ENCODE measurements at regions of chr9 and their contacts with region 1.

Region 1: GRCh38 chr9:104747558-104748358 is at the start of gene NIPSNAP3A:
- DNase-seq: peak; percentile 85
- H3K4me3 Mint-ChIP-seq: peak within 1 kb of the TSS; percentile 98
- H3K27ac Mint-ChIP-seq: peak within 1 kb of the TSS; percentile 98
- H3K4me1 Mint-ChIP-seq: peaks cover 22% of the 10 kb centered on the region
- H3K27me3 Mint-ChIP-seq: no peaks in the 10 kb centered on the region
- total RNA-seq, gene NIPSNAP3A: 10.3 and 10.8 TPM in 2 replicates

Region 2: GRCh38 chr9:103301051-103301450 is 1446.7 kb before region 1 on chr9:
- intact Hi-C with region 1: no loop called
- DNase-seq: no peak
- H3K4me3 Mint-ChIP-seq: no peak overlapping the region
- H3K27ac Mint-ChIP-seq: no peak overlapping the region
- H3K4me1 Mint-ChIP-seq: no peaks in the 10 kb centered on the region
- H3K27me3 Mint-ChIP-seq: no peaks in the 10 kb centered on the region

Region 3: GRCh38 chr9:103397868-103398600 is 1349.7 kb before region 1 on chr9:
- intact Hi-C with region 1: loop called (anchors 5 kb)
- DNase-seq: no peak
- H3K4me3 Mint-ChIP-seq: no peak overlapping the region
- H3K27ac Mint-ChIP-seq: no peak overlapping the region
- H3K4me1 Mint-ChIP-seq: no peaks in the 10 kb centered on the region
- H3K27me3 Mint-ChIP-seq: no peaks in the 10 kb centered on the region

Region 4: DNA sequence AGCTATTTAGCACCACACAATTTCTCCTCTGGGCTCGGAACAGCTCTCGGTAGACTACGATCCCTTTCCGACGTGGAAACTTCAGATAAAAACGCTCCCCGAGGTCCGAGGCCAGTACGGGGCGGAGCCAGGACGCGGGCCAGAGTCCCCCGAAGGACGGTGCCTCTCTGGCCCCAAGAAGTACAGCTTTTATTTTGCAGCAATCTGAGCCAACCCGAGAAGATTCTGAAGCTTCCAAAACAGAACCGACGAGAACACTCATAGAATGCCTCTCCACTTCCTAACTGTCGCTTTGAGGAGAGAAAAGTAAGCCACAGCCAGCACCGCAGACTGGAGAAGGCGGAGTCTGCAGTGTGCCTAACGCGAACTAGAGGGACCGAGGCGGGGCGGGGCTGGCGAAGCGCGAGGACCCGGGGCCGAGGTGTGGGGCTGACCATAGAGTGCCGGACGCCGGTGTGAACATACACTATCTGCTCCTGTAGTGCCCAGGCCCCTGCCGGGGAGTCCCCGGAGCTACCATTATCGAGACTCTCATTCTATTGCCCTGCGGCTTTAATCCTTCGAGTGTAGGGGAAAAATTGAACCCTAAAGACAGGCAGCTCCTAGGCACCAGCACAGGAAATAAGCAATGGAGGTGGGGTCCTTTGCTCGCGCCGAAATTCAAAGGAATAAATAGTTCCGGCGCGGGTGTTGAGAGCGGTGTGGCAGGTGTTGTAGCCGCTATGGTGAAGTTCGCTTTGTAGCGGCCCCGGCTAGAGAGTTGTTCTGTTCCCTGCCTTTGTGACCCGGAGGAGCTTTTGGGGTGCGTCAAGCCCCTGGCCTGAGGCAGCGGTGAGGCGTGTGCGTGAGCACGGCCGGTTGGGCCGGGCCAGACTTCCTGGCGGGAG is 653.9 kb before region 1 on chr9 and contains the start of gene SMC2:
- intact Hi-C with region 1: loop called (anchors 1 kb)
- DNase-seq: peak; percentile 91
- H3K4me3 Mint-ChIP-seq: peak within 1 kb of the TSS; percentile 95
- H3K27ac Mint-ChIP-seq: peak within 1 kb of the TSS; percentile 99
- H3K4me1 Mint-ChIP-seq: peaks cover 44% of the 10 kb centered on the region
- H3K27me3 Mint-ChIP-seq: no peaks in the 10 kb centered on the region
- total RNA-seq, gene SMC2: 56.1 and 57.5 TPM in 2 replicates

Region 5: DNA sequence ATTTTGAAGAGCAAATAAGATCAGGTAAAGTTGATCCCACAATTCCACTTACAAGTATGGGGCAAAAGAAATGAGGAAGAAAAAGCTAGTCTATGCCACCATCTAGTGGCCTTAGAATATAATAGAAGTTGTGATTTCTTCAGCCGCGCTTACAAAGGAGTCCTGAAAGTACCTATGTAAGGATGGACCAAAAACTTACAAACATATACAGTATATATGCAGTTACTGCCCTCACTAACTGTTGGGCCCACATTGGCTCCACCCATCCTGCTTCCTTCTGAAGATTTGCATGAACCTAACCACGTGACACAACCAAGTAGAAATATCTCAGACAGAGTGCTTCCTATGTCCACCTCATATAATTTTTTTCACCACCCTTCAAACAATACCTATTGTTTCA is 65.1 kb before region 1 on chr9:
- intact Hi-C with region 1: loop called (anchors 2 kb)
- DNase-seq: no peak
- H3K4me3 Mint-ChIP-seq: no peak overlapping the region
- H3K27ac Mint-ChIP-seq: no peak overlapping the region
- H3K4me1 Mint-ChIP-seq: peaks cover 3% of the 10 kb centered on the region
- H3K27me3 Mint-ChIP-seq: no peaks in the 10 kb centered on the region

Region 6: GRCh38 chr9:104765138-104765537 is 17.4 kb after region 1 on chr9:
- intact Hi-C with region 1: loop called (anchors 1 kb)
- DNase-seq: no peak
- H3K4me3 Mint-ChIP-seq: peak overlapping the region; percentile 24
- H3K27ac Mint-ChIP-seq: no peak overlapping the region
- H3K4me1 Mint-ChIP-seq: no peaks in the 10 kb centered on the region
- H3K27me3 Mint-ChIP-seq: peaks cover 10% of the 10 kb centered on the region

Region 7: GRCh38 chr9:104810421-104811339 is 62.9 kb after region 1 on chr9:
- intact Hi-C with region 1: no loop called
- DNase-seq: no peak
- H3K4me3 Mint-ChIP-seq: no peak overlapping the region
- H3K27ac Mint-ChIP-seq: no peak overlapping the region
- H3K4me1 Mint-ChIP-seq: no peaks in the 10 kb centered on the region
- H3K27me3 Mint-ChIP-seq: no peaks in the 10 kb centered on the region

Region 8: GRCh38 chr9:104868687-104869404 is 121.1 kb after region 1 on chr9:
- intact Hi-C with region 1: no loop called
- DNase-seq: no peak
- H3K4me3 Mint-ChIP-seq: no peak overlapping the region
- H3K27ac Mint-ChIP-seq: no peak overlapping the region
- H3K4me1 Mint-ChIP-seq: no peaks in the 10 kb centered on the region
- H3K27me3 Mint-ChIP-seq: peaks cover 5% of the 10 kb centered on the region

Region 9: DNA sequence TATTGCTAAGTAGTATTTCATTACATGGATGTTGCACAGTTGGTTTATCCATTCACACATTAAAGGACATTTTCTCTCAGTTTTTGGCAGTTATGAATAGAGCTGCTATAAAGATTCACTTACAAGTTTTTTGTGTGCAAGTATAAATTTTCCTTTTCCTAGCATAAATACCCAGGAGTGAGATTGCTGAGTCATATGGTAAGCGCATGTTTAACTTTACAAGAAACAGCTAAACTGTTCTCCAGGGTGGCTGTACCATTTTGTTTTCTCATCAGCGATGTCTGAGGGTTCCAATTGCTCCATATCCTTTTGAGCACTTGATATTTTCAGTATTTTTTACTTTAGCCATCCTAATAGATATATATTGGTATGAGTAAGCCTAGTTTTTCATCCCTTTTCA is 196.6 kb after region 1 on chr9:
- intact Hi-C with region 1: no loop called
- DNase-seq: no peak
- H3K4me3 Mint-ChIP-seq: no peak overlapping the region
- H3K27ac Mint-ChIP-seq: no peak overlapping the region
- H3K4me1 Mint-ChIP-seq: peaks cover 7% of the 10 kb centered on the region
- H3K27me3 Mint-ChIP-seq: peaks cover 2% of the 10 kb centered on the region

Measured in activated T-helper 2 cell treated with anti-CD3 and anti-CD28 coated beads, Interferon-gamma antibody, Interleukin-2, Interleukin-4, amounts not matched to agents 10 μg/mL and 5 μg/mL and 100 μg/mL, durations not matched to agents 14 hours and 24 hours and 36 hours (primary cell).